Activated CD4-positive, alpha-beta T cell treated with anti-CD3 and anti-CD28 coated beads, Interleukin-2, amount 10 ng/mL, durations not matched to agents 7 days and 5 days (primary cell): ENCODE measurements at regions of chr9 and their contacts with region 1.

Region 1: DNA sequence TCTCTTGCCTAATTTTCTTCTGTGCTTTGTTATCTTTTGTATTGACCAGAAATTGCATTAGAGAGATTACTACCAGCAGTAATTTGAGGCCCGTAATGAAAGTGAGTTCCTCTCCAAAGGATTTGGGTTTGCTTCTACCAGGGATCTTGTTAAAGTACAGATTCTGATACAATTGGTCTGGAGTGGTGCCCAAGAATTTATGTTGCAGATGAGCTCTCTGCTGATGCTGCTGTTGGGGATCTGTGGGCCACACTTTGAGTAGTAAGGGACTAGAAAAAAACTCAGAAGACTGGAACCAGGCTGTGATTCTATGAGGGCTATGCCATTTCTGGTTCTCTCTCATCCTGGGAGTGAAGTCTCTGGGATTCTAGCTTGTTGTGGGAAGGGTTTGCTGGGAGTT is 192.2 kb downstream of the SEC61B start:
- DNase-seq: no peak
- H3K4me3 Mint-ChIP-seq: no peak overlapping the region
- H3K27ac Mint-ChIP-seq: no peak overlapping the region
- H3K4me1 Mint-ChIP-seq: peaks cover 7% of the 10 kb centered on the region
- H3K27me3 Mint-ChIP-seq: peaks cover 8% of the 10 kb centered on the region

Region 2: DNA sequence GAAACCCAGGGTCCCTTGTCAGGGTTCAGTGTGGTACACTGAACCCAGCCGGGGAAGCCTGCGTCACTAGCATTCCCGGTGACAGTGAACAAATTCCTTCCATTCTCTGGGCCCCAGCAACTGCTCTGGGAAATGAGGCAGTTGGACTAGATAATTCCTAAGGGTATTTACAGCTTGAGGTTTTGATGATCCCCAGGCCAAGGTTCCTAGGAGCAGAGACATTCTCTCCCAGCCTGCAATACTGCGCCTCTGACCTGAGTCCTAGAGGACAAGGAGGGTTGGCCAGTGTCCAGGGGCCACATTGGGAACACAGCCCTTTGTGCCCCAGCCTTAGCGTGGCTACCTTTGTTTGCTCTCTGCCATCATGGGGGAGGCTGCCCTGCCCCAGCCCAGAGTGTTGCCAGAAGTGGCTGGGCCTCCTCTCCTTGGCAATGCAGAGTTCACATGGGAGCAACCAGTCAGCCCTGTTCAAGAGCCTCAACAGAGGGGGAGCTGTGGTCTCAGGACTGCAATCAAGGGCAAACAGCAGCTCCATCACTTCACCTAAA is 14.1 kb before region 1 on chr9:
- CTCF ChIA-PET with region 1: interaction called, 4 read pairs
- POLR2A ChIA-PET with region 1: interaction called, 11 read pairs
- DNase-seq: no peak
- H3K4me3 Mint-ChIP-seq: no peak overlapping the region
- H3K27ac Mint-ChIP-seq: no peak overlapping the region
- H3K4me1 Mint-ChIP-seq: no peaks in the 10 kb centered on the region
- H3K27me3 Mint-ChIP-seq: no peaks in the 10 kb centered on the region